ENCODE measurements at regions of chr18 and their contacts with region 1.

Region 1: GRCh38 chr18:27030416-27030815 is 154.7 kb downstream of the CHST9 start:
- DNase-seq: no peak
- H3K4me3 ChIP-seq: no peak overlapping the region
- H3K27ac ChIP-seq: no peak overlapping the region
- H3K4me1 ChIP-seq: no peaks in the 10 kb centered on the region
- H3K27me3 ChIP-seq: 0 out of 2 replicates have a peak, but pooled peaks cover 4% of the 10 kb centered on the region
- CTCF ChIP-seq: no peak
- EP300 ChIP-seq: no peak
- RAD21 ChIP-seq: no peak

Region 2: DNA sequence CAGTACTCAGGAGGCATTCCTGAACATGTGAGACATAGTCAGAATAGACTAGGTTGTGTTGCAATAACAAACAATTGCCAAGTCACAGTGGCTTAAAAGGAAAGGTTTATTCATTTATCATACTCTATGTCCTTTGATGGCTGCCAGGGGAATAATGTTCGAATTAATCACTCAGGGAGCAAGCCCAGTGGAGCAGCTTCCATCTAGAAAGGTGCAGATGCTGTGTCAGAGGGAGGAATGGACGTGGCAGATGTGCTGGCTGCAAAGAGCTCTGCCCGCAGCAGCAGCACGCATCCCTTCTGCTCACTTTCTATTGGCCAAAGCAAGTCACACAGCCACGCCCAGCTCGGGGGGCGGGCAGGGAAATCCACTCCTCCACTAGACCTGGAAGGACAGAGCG is 59.0 kb before region 1 on chr18:
- CTCF ChIA-PET with region 1: no interaction called
- POLR2A ChIA-PET with region 1: no interaction called
- DNase-seq: no peak
- H3K4me3 ChIP-seq: no peak overlapping the region
- H3K27ac ChIP-seq: no peak overlapping the region
- H3K4me1 ChIP-seq: peaks cover 0 to 4% of the 10 kb centered on the region in 2 experiments; a peak in 1 of 4 replicates
- H3K27me3 ChIP-seq: no peaks in the 10 kb centered on the region
- CTCF ChIP-seq: no peak
- EP300 ChIP-seq: no peak
- RAD21 ChIP-seq: no peak

Region 3: DNA sequence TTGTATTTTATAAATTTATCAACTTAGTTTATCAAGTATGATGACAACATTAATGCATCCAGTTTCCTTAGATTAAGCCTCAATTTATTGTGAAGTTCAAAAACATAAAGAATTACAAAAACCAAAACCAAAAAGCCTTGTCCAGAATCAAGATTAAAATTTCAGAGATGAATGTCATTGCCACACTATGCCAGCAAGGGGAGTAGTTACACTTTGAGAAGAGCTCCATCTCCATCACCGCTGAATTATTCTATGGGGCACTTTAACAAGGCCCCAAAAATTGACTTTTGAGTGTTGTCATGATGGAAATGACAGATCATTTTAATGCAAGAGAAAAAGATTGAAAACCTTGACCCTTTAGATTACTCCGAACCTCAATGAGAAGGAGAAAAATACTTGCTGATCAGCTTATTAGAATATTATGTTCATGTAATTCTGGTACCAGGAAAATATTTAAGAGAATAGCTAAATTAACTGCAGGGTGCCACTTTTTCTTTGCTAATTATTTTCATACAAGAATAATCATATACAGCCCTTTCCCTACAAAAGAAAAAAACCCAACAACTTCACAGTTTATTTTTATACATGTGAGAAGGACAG is 12.4 kb before region 1 on chr18:
- CTCF ChIA-PET with region 1: interaction called, 17 read pairs
- POLR2A ChIA-PET with region 1: no interaction called
- DNase-seq: peak; percentile 43
- H3K4me3 ChIP-seq: peak overlapping the region in 1 of 2 experiments; percentile 18; a peak in 1 of 4 replicates
- H3K27ac ChIP-seq: no peak overlapping the region
- H3K4me1 ChIP-seq: no peaks in the 10 kb centered on the region
- H3K27me3 ChIP-seq: no peaks in the 10 kb centered on the region
- CTCF ChIP-seq: peak; percentile 68
- EP300 ChIP-seq: no peak
- RAD21 ChIP-seq: peak; percentile 87

Measured in SK-N-SH (cell line).